BJ (cell line): ENCODE measurements at regions of chr7 and their contacts with region 1.

Region 1: DNA sequence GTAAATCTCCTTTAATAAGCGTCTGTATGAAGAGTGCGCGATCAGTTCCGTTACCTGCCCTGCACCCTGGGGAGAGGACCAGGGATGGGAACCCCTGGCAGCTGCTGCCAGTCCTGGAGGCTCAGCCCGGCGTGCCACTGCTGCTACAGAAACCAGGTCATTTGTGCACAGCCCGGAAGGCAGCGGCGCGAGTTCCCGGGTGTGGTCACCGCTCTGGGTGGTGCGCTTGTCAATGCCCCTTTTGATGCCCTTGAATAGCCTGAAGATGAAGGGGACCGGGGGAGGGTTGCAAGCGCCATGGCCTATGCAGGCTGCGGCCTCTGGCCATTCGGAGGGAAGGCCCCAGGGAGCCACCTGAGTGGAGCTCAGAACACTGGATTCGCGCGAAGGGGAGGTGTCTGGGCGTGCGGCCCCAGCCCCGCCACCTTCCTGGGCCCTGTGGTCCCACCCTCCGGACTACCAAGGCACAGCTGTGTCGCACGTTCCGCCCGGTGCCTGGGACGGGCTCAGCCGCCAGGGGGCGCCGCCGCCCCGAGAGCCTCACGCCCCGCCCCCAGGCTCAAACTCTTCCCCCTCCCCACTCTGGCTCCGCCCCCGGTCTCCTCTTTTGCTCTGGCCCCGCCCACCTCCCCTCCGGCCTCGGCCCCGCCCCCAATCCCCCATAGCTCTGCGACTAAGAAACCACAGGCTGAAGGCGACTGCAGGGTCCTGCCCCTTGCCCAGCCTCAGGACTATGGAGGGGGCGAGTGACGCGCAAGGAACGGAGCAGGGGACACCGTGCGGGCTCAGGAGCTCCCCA is 16.5 kb downstream of the AP5Z1 start:
- DNase-seq: no peak
- H3K4me3 ChIP-seq: no peak overlapping the region
- H3K27me3 ChIP-seq: no peaks in the 10 kb centered on the region
- CTCF ChIP-seq: peak; percentile 68

Region 2: GRCh38 chr7:4631664-4632171 is 160.2 kb before region 1 on chr7:
- CTCF ChIA-PET with region 1: no interaction called
- POLR2A ChIA-PET with region 1: no interaction called
- DNase-seq: peak; percentile 57
- H3K4me3 ChIP-seq: peak overlapping the region; percentile 40
- H3K27me3 ChIP-seq: peaks cover 3% of the 10 kb centered on the region; the same call in 1 of the 2 replicates
- CTCF ChIP-seq: peak; percentile 78

Region 3: DNA sequence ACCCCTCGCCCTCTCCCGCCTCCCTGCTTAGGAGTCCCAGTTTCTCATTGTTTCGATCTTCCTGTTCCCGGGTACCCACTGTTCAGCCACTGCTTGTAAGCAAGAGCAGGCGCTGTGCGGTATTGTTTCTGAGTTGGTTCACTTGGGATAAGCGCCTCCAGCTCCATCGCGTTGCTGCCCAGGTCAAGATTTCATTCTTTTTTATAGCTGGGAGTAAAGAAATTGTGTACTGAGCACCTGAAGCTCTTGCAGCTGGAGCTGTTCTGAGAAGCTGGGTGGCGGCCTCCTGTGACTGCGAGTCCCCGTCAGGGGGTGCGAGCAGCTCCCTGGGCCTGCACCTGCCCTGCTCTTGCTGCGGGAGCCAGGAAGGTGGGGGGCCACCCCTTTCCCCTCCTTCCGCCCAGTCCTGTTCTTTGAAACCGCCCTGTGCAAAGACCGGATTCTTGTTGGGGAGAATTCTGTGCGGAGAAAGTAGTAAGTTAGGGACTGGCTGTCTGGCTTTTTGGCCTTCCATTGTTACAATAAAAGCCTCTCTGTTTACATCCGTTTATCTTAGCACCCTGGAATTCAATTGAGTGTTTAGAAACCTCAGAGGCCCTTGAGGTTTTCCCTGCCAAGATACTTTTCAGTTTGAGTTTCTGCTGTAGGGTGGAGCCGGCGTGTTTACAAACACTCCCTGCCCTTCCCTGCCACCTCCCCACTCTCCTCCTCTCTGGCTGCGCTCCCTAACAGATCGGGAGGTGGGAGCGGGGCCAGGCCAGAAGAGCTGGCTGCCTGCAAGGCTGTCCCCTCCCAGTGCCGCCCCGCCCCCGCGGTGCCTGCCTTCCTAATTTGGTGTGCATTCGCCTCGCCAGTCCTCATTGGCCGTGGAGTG is 47.3 kb before region 1 on chr7:
- CTCF ChIA-PET with region 1: no interaction called
- POLR2A ChIA-PET with region 1: no interaction called
- DNase-seq: peak; percentile 99
- H3K4me3 ChIP-seq: peak overlapping the region; percentile 1; the same call in 1 of the 2 replicates
- H3K27me3 ChIP-seq: no peaks in the 10 kb centered on the region
- CTCF ChIP-seq: no peak

Region 4: DNA sequence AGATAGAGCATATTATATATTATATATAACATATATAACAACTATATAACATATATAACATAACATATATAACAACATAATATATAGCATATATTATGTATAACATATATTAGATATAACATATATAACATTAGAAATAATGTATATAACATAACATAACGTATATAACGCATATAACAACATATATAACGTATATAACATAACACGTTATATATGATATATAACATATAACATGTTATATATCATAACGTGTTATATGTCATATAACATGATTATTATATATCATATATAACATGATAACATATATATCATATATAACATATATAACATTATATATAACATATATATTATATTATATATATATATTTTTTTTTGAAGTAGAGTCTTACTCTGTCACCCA is 12.8 kb before region 1 on chr7:
- CTCF ChIA-PET with region 1: interaction called, 10 read pairs
- POLR2A ChIA-PET with region 1: no interaction called
- DNase-seq: no peak
- H3K4me3 ChIP-seq: no peak overlapping the region
- H3K27me3 ChIP-seq: no peaks in the 10 kb centered on the region
- CTCF ChIP-seq: no peak